Activated T-helper 2 cell treated with anti-CD3 and anti-CD28 coated beads, Interferon-gamma antibody, Interleukin-2, Interleukin-4, amounts not matched to agents 10 μg/mL and 5 μg/mL and 100 μg/mL, durations not matched to agents 14 hours and 24 hours and 36 hours (primary cell): ENCODE measurements at regions of chr6 and their contacts with region 1.

Region 1: GRCh38 chr6:135195522-135195921 is 14.4 kb downstream of the MYB start:
- DNase-seq: no peak
- H3K4me3 Mint-ChIP-seq: no peak overlapping the region
- H3K27ac Mint-ChIP-seq: peak overlapping the region; percentile 63
- H3K4me1 Mint-ChIP-seq: peaks cover 56% of the 10 kb centered on the region
- H3K27me3 Mint-ChIP-seq: no peaks in the 10 kb centered on the region

Region 2: DNA sequence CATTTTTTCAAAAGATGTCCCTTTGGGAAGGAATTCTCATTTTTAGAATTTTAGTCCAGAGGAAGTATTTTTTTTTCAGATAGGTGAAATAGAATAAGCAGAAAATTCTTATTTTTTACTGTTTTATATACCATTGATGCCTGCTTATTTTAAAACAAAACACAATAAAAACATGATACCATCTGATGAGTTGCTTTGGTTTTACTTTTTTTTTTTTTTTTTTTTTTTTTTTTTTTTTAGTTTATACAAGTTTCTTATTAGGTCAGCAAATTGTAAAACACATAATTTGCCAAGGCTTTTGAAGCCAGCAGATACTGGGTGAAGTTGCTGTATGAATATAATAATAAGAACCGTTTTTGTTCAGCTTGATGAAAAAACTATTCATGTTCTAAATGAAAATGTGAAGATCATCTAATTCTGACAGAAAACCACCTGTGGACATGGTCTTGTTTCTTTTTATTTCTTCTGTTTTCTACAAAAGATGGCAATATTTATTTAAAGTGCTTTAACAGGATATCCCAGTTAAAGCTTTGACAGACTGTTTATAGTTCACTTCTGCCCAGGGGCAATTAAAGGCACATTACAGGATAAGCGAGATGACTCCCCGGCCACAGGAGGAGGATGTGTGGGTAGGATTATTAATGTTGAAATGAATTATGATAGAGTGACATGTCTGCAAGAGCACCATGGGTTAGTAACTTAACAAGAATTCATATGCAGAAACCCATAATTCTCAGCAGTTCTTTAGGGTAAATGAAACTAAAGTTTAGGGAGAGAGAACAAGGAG is 16.7 kb after region 1 on chr6:
- intact Hi-C with region 1: loop called (anchors 2 kb)
- DNase-seq: no peak
- H3K4me3 Mint-ChIP-seq: peak overlapping the region; percentile 38
- H3K27ac Mint-ChIP-seq: peak overlapping the region; percentile 88
- H3K4me1 Mint-ChIP-seq: peaks cover 51% of the 10 kb centered on the region
- H3K27me3 Mint-ChIP-seq: no peaks in the 10 kb centered on the region